Activated T-helper 2 cell treated with anti-CD3 and anti-CD28 coated beads, Interferon-gamma antibody, Interleukin-2, Interleukin-4, amounts not matched to agents 10 μg/mL and 5 μg/mL and 100 μg/mL, durations not matched to agents 14 hours and 24 hours and 36 hours (primary cell): ENCODE measurements at regions of chr1 and their contacts with region 1.

Region 1: DNA sequence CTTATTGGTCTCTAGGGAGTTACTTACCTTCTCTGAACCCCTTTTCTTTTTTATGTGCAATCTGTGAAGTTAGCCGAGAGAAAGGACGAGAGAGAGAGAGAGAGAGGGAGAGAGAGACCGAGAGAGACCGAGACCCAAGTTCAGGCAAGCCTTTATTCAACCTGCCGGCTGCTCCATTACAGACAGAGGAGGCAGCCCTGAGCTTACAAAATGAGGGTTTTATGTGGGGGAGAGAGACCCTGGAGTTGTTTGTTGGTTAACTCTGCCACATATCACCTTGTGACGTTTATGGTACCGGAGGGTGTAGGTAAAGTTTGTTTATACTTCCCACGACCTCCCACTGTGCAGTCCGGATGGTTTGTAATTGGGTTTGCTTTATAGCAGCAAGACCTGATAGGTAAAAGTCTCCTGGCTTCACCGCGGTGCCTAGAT is 1.5 kb upstream of the MCOLN3 start:
- DNase-seq: no peak
- H3K4me3 Mint-ChIP-seq: peak overlapping the region; percentile 15
- H3K27ac Mint-ChIP-seq: no peak overlapping the region
- H3K4me1 Mint-ChIP-seq: peaks cover 24% of the 10 kb centered on the region
- H3K27me3 Mint-ChIP-seq: peaks cover 33% of the 10 kb centered on the region

Region 2: DNA sequence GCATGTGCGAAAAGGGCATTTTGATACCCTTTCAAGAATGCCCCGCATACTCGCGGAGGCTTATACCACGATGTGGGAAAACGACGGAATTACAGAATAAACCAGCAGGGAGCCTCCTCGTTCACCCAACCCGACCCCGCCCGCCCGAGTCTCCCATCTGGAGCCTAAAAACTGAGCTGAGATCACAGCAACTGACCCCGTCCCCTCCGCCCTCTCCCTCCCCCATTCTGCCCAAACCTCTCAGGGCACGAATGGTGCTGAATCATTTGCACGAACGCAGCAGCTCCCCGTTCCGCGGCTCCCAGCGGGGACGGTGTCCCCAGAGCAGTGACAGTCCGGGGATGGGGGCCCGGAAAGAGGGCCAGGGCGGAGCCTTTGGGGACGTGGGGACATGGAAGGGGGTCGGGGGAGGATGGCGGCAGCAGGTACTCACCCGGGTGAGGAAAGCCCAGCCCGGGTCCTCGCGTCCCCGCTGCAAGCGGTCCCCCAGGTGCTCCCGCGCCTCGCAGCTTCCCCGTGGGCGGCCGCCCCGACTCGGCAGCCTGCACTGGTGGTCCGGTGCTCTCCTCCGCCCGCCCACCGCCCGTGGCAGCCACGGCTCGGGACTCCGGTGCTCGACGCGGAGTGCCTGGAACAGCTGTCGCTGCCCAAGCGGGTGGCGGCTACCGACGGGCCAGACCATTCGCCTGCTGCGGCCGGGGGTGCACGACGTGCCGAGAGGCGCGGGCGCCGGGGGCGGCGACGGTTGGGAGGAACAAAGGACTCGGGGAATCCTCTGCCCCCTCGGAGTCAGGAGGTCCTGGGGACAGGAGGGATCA is 1051.0 kb before region 1 on chr1 and contains the start of gene TTLL7:
- intact Hi-C with region 1: no loop called
- DNase-seq: peak; percentile 63
- H3K4me3 Mint-ChIP-seq: peak within 1 kb of the TSS; percentile 82
- H3K27ac Mint-ChIP-seq: no peak within 1 kb of the TSS
- H3K4me1 Mint-ChIP-seq: peaks cover 17% of the 10 kb centered on the region
- H3K27me3 Mint-ChIP-seq: peaks cover 60% of the 10 kb centered on the region
- total RNA-seq, gene TTLL7: 0.84 and 1.4 TPM in 2 replicates

Region 3: DNA sequence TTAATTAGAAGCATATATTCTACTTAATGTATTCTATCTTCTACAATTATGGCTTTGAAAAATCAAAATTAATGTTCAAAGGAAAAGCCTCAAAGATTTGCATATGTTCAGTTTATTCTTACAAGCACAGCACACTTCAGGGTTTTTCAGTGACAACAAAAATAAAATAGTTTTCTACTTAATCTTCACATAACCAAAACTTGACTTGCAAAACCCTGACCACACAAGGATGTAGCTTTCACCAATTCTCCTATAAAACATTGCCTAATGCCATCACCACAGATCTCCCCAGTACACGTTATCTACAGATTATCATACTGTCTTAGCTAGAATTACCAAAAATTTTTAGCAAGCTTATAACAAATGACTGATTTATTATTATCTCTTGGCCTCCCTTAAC is 180.0 kb before region 1 on chr1:
- intact Hi-C with region 1: no loop called
- DNase-seq: no peak
- H3K4me3 Mint-ChIP-seq: no peak overlapping the region
- H3K27ac Mint-ChIP-seq: no peak overlapping the region
- H3K4me1 Mint-ChIP-seq: peaks cover 4% of the 10 kb centered on the region
- H3K27me3 Mint-ChIP-seq: peaks cover 40% of the 10 kb centered on the region

Region 4: DNA sequence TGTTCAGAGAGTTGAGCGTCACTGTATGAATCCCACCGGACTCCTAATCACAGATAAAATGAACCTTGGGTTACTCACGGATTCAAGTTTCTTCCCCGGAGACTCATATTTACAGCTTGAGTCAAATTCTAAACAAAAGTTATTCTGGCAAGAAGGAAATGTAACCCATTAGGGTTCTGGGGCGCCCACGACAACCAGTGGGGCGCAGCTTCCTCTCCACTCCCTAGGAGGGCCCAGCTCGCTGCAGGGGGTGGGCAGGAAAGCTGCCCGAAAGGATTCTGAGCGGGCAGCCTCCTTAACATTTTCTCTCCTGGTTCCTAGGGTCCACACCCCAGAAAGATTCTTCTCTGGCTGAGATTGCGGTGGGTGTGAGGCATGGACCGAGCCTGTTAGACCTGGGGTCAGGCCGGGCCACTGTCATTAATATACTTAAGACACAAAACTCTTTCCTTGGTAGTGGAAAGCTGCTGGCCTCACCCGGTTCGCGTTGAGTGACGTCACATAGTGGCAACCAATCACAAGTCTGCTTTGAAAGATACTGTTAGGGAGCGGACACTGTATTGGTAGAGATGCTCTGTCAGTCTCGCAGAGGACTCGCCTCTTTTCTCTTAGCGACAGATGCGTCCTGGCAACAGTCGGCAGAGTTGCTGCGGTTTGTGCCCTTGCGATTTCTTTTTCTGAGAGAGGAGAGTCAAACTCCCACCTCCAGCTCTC is 12.1 kb after region 1 on chr1:
- intact Hi-C with region 1: loop called (anchors 1 kb)
- DNase-seq: peak; percentile 89
- H3K4me3 Mint-ChIP-seq: peak overlapping the region; percentile 79
- H3K27ac Mint-ChIP-seq: peak overlapping the region; percentile 83
- H3K4me1 Mint-ChIP-seq: peaks cover 18% of the 10 kb centered on the region
- H3K27me3 Mint-ChIP-seq: peaks cover 21% of the 10 kb centered on the region